Mammary epithelial cell (primary cell): ENCODE measurements at regions of chr5 and their contacts with region 1.

Region 1: DNA sequence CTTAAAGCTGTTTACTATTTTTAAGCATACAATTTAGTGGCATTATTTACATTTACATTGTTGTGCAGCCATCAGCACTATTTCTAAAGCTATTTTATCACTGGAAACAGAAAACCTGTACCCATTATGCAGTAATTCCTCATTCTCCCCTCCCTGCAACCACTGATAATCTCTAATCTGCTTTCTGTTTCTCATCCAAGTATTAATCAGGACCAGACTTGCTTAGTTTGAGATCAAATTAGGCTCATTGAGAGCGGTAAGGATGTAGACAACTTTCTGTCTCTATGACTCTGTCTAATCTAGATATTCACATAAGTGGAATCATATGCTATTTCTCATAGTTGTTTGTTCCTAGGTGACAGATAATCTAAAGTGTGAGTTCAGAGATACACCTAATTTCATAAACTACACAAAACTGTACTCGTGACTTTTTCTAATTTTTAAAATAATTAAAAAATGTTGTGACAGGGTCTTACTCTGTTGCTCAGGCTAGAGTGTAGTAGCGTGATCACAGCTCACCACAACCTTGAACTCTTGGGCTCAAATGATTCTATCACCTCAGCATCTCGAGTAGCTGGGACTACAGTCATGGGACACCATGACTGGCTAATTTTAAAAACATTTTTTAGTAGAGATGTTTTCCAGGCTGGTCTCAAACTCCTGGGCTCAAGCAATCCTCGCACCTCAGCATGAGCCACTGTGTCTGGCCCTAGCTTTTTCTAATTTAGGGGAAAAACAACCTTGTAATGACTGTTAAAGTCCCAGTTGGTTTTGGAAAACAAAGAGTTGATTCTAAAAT is 37.6 kb downstream of the BDP1 start:
- DNase-seq: no peak
- H3K4me3 ChIP-seq: no peak overlapping the region
- H3K27ac ChIP-seq: no peak overlapping the region
- H3K4me1 ChIP-seq: no peaks in the 10 kb centered on the region
- H3K27me3 ChIP-seq: no peaks in the 10 kb centered on the region
- CTCF ChIP-seq: no peak

Region 2: DNA sequence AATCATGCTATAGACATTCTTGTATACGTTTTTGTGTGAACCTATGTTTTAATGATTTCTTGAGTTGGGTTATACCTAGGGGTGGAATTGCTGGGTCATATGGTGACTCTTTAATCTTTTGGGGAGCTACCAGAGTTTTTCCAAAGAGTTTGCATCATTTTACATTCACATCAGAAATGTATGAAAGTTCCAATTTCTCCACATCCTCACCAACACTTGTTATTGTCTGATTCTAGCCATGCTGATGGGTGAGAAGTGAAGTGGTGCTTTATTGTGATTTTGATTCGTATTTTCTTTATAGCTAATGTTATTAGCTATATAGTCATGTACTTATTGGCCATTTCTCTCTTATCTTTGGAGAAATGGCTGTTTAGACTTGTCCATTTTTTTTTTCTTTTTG is 1982.3 kb before region 1 on chr5:
- CTCF ChIA-PET with region 1: interaction called, 12 read pairs
- dilution Hi-C with region 1: no loop called
- in situ Hi-C with region 1: no loop called
- intact Hi-C with region 1: no loop called
- DNase-seq: no peak
- H3K4me3 ChIP-seq: no peak overlapping the region
- H3K27ac ChIP-seq: no peak overlapping the region
- H3K4me1 ChIP-seq: peaks cover 9% of the 10 kb centered on the region
- H3K27me3 ChIP-seq: no peaks in the 10 kb centered on the region
- CTCF ChIP-seq: no peak